Caco-2 (cell line): ENCODE measurements at regions of chr6 and their contacts with region 1.

Region 1: DNA sequence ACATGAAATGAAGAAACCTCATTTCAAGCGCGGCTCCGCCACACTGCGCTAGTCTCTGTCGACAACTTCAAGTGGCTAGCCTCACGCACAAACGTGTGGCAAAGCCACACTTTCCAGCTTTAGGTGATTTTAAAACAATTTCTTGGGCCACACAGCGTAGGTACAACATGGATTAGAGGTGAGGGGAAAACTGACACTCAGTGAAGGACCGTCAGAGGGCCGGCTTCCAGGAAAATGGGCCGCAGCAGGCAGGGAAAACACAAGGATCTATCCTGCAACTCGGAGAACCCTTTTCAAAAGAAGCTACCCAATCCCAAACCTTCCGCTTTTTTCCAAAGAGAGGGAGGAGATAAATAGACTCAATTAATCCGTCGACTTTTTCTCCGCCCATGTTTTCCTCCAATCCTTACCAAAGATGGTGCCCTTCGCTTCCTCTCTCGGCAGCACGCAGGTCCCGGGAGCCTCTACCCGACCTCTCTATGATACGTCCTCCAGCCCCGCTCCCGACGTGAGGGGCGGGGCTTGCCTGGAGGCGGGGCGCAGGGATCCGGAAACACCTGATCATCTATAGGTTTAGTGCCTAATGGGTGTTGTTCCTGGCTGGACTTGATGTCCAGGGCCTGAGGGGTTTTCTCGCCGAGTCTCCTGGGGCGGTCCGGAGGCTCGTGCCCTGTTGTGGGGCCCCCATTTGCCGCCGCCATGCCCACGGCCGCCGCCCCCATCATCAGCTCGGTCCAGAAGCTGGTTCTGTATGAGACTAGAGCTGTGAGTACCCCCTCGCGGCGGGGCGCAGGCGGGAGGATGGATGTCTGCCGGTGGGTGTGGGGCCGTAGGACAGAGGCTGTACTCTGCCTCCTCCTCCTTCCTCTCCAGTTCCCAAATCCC is at the starts of genes AK9 and FIG4:
- DNase-seq: peak; percentile 93 to 95
- H3K4me3 ChIP-seq: peak within 1 kb of the TSS; percentile 77
- H3K4me3 Mint-ChIP-seq: peak within 1 kb of the TSS; percentile 83
- H3K27ac Mint-ChIP-seq: peak within 1 kb of the TSS; percentile 84
- H3K4me1 ChIP-seq: 0 out of 2 replicates have a peak, but pooled peaks cover 7% of the 10 kb centered on the region
- H3K4me1 Mint-ChIP-seq: no peaks in the 10 kb centered on the region
- H3K27me3 ChIP-seq: no peaks in the 10 kb centered on the region
- H3K27me3 Mint-ChIP-seq: no peaks in the 10 kb centered on the region
- CTCF ChIP-seq: peak; percentile 15 to 38
- total RNA-seq, gene AK9: 3.4 and 4.4 TPM in 2 replicates
- total RNA-seq, gene FIG4: 7.3 and 7.9 TPM in 2 replicates

Region 2: GRCh38 chr6:109526905-109527628 is 163.9 kb before region 1 on chr6:
- CTCF ChIA-PET with region 1: interaction called, 4 read pairs
- POLR2A ChIA-PET with region 1: no interaction called
- intact Hi-C with region 1: loop called (anchors 1 kb)
- DNase-seq: peak; percentile 53 to 67
- H3K4me3 ChIP-seq: no peak overlapping the region
- H3K4me3 Mint-ChIP-seq: no peak overlapping the region
- H3K27ac Mint-ChIP-seq: no peak overlapping the region
- H3K4me1 ChIP-seq: no peaks in the 10 kb centered on the region
- H3K4me1 Mint-ChIP-seq: no peaks in the 10 kb centered on the region
- H3K27me3 ChIP-seq: no peaks in the 10 kb centered on the region
- H3K27me3 Mint-ChIP-seq: peaks cover 4% of the 10 kb centered on the region
- CTCF ChIP-seq: peak; percentile 56 to 65

Region 3: GRCh38 chr6:109595998-109596397 is 95.0 kb before region 1 on chr6:
- CTCF ChIA-PET with region 1: interaction called, 6 read pairs
- POLR2A ChIA-PET with region 1: no interaction called
- intact Hi-C with region 1: loop called (anchors 5 kb)
- DNase-seq: peak in 1 of 2 experiments; percentile 19
- H3K4me3 ChIP-seq: no peak overlapping the region
- H3K4me3 Mint-ChIP-seq: no peak overlapping the region
- H3K27ac Mint-ChIP-seq: no peak overlapping the region
- H3K4me1 ChIP-seq: no peaks in the 10 kb centered on the region
- H3K4me1 Mint-ChIP-seq: no peaks in the 10 kb centered on the region
- H3K27me3 ChIP-seq: no peaks in the 10 kb centered on the region
- H3K27me3 Mint-ChIP-seq: peaks cover 8% of the 10 kb centered on the region
- CTCF ChIP-seq: peak; percentile 38 to 42

Region 4: GRCh38 chr6:109671733-109672132 is 19.2 kb before region 1 on chr6:
- CTCF ChIA-PET with region 1: no interaction called
- POLR2A ChIA-PET with region 1: no interaction called
- intact Hi-C with region 1: loop called (anchors 1 kb)
- DNase-seq: no peak
- H3K4me3 ChIP-seq: no peak overlapping the region
- H3K4me3 Mint-ChIP-seq: no peak overlapping the region
- H3K27ac Mint-ChIP-seq: no peak overlapping the region
- H3K4me1 ChIP-seq: peaks cover 9% of the 10 kb centered on the region; the same call in 1 of the 2 replicates
- H3K4me1 Mint-ChIP-seq: peaks cover 14% of the 10 kb centered on the region
- H3K27me3 ChIP-seq: no peaks in the 10 kb centered on the region
- H3K27me3 Mint-ChIP-seq: no peaks in the 10 kb centered on the region
- CTCF ChIP-seq: no peak